WTC11 (cell line): ENCODE measurements at regions of chrX and their contacts with region 1.

Region 1: GRCh38 chrX:42714981-42715700 is 62.8 kb downstream of the PPP1R2C start:
- DNase-seq: peak; percentile 58
- ATAC-seq: peak; percentile 94
- H3K4me3 Mint-ChIP-seq: no peak overlapping the region
- H3K27ac Mint-ChIP-seq: no peak overlapping the region
- H3K4me1 Mint-ChIP-seq: peaks cover 11% of the 10 kb centered on the region
- H3K27me3 Mint-ChIP-seq: no peaks in the 10 kb centered on the region
- CTCF ChIP-seq: no peak

Region 2: DNA sequence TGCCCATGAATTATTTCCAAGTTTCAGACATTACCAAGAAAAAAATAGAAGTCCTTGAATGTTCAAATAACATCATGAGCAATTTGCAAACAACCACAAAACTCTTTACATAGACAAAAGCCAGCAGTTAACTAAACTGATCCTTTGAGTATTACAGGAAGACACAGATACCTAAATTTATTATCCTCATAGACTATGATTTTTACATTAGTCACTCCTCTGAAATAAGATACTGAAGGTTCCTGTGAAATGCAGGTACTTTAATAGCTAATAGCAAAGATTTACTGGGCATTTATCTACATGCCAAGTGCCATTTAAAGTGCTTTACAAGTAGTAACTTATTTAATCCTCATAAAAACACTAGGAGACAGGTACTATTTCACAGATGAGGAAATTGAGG is 953.4 kb before region 1 on chrX:
- CTCF ChIA-PET with region 1: no interaction called
- POLR2A ChIA-PET with region 1: no interaction called
- DNase-seq: no peak
- ATAC-seq: no peak
- H3K4me3 Mint-ChIP-seq: no peak overlapping the region
- H3K27ac Mint-ChIP-seq: no peak overlapping the region
- H3K4me1 Mint-ChIP-seq: peaks cover 20% of the 10 kb centered on the region
- H3K27me3 Mint-ChIP-seq: no peaks in the 10 kb centered on the region
- CTCF ChIP-seq: no peak

Region 3: DNA sequence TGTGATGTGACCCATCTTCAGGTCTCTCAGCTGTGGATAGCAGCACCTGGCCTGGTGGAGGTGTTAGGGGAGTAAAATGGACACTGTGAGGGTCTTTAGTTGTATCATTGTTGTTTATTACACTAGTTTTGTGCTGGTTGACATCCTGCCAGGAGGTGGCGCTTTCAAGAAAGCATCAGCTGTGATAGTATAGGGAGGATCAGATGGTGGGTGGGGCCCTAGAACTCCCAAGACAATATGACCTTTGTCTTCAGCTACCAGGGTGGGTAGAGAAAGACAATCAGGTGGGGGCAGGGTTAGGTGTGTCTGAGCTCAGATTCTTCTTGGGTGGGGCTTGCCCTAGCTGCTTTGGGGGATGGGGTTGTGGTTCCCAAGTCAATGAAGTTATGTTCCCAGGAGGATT is 100.0 kb before region 1 on chrX:
- CTCF ChIA-PET with region 1: interaction called, 10 read pairs
- POLR2A ChIA-PET with region 1: no interaction called
- DNase-seq: peak; percentile 36
- ATAC-seq: peak; percentile 64
- H3K4me3 Mint-ChIP-seq: no peak overlapping the region
- H3K27ac Mint-ChIP-seq: no peak overlapping the region; the same call in 1 of the 2 replicates
- H3K4me1 Mint-ChIP-seq: peaks cover 16% of the 10 kb centered on the region
- H3K27me3 Mint-ChIP-seq: no peaks in the 10 kb centered on the region
- CTCF ChIP-seq: no peak